ENCODE measurements at regions of chr3 and their contacts with region 1.

Region 1: DNA sequence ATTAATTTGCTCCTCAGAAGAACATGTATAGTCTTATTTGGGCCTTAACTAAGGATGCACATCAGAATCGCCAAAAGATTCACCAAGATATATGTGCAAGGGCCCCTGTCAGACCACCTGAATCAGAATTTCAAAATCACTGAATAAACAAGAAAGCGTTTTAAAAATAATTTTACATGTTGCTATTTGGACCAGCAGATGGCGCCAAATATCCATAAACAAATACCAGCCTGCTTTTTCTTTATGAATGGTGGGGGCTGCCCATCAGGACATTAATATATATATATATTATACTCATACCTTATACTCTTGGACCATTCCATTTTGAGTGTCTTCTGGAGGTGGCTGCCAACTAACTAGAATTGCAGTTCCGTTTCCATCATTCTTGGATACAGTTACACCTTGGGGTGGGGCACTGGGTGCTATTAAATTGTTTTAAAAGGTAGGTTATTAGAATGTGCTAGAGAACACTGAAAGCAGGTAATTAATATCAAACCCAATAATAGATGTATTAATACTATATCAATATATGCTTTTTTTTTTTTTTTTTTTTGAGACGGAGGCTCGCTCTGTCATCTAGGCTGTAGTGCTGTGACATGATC is 1108.3 kb downstream of the ROBO1 start:
- DNase-seq: peak; percentile 27
- ATAC-seq: no peak
- H3K4me3 ChIP-seq: no peak overlapping the region
- H3K4me3 Mint-ChIP-seq: no peak overlapping the region
- H3K27ac ChIP-seq: no peak overlapping the region
- H3K27ac Mint-ChIP-seq: no peak overlapping the region
- H3K4me1 ChIP-seq: no peaks in the 10 kb centered on the region
- H3K4me1 Mint-ChIP-seq: no peaks in the 10 kb centered on the region
- H3K27me3 ChIP-seq: no peaks in the 10 kb centered on the region
- H3K27me3 Mint-ChIP-seq: no peaks in the 10 kb centered on the region
- CTCF ChIP-seq: peak; percentile 74

Region 2: GRCh38 chr3:79032686-79033318 is 373.3 kb after region 1 on chr3:
- CTCF ChIA-PET with region 1: no interaction called
- POLR2A ChIA-PET with region 1: no interaction called
- intact Hi-C with region 1: loop called (anchors 2 kb)
- DNase-seq: peak; percentile 6
- ATAC-seq: no peak
- H3K4me3 ChIP-seq: no peak overlapping the region
- H3K4me3 Mint-ChIP-seq: no peak overlapping the region
- H3K27ac ChIP-seq: no peak overlapping the region
- H3K27ac Mint-ChIP-seq: no peak overlapping the region
- H3K4me1 ChIP-seq: no peaks in the 10 kb centered on the region
- H3K4me1 Mint-ChIP-seq: no peaks in the 10 kb centered on the region
- H3K27me3 ChIP-seq: no peaks in the 10 kb centered on the region
- H3K27me3 Mint-ChIP-seq: no peaks in the 10 kb centered on the region
- CTCF ChIP-seq: no peak